MCF 10A (cell line): ENCODE measurements at regions of chr6 and their contacts with region 1.

Region 1: GRCh38 chr6:132734694-132735635 is 21.1 kb upstream of the VNN1 start:
- DNase-seq: peak; percentile 94
- H3K4me3 Mint-ChIP-seq: peak overlapping the region; percentile 59
- H3K27ac Mint-ChIP-seq: peak overlapping the region; percentile 86
- H3K4me1 Mint-ChIP-seq: peaks cover 38% of the 10 kb centered on the region
- H3K27me3 Mint-ChIP-seq: no peaks in the 10 kb centered on the region
- CTCF ChIP-seq: peak; percentile 15

Region 2: GRCh38 chr6:132466972-132467371 is 268.0 kb before region 1 on chr6:
- CTCF ChIA-PET with region 1: no interaction called
- POLR2A ChIA-PET with region 1: no interaction called
- intact Hi-C with region 1: no loop called
- DNase-seq: peak; percentile 23
- H3K4me3 Mint-ChIP-seq: no peak overlapping the region
- H3K27ac Mint-ChIP-seq: no peak overlapping the region
- H3K4me1 Mint-ChIP-seq: no peaks in the 10 kb centered on the region
- H3K27me3 Mint-ChIP-seq: no peaks in the 10 kb centered on the region
- CTCF ChIP-seq: no peak

Region 3: GRCh38 chr6:132683543-132683942 is 51.4 kb before region 1 on chr6:
- CTCF ChIA-PET with region 1: interaction called, 4 read pairs
- POLR2A ChIA-PET with region 1: interaction called, 38 read pairs
- intact Hi-C with region 1: loop called (anchors 2 kb)
- DNase-seq: peak; percentile 85
- H3K4me3 Mint-ChIP-seq: peak overlapping the region; percentile 66
- H3K27ac Mint-ChIP-seq: peak overlapping the region; percentile 95
- H3K4me1 Mint-ChIP-seq: peaks cover 28% of the 10 kb centered on the region
- H3K27me3 Mint-ChIP-seq: no peaks in the 10 kb centered on the region
- CTCF ChIP-seq: no peak